IMR-90 (cell line): ENCODE measurements at regions of chr17 and their contacts with region 1.

Region 1: DNA sequence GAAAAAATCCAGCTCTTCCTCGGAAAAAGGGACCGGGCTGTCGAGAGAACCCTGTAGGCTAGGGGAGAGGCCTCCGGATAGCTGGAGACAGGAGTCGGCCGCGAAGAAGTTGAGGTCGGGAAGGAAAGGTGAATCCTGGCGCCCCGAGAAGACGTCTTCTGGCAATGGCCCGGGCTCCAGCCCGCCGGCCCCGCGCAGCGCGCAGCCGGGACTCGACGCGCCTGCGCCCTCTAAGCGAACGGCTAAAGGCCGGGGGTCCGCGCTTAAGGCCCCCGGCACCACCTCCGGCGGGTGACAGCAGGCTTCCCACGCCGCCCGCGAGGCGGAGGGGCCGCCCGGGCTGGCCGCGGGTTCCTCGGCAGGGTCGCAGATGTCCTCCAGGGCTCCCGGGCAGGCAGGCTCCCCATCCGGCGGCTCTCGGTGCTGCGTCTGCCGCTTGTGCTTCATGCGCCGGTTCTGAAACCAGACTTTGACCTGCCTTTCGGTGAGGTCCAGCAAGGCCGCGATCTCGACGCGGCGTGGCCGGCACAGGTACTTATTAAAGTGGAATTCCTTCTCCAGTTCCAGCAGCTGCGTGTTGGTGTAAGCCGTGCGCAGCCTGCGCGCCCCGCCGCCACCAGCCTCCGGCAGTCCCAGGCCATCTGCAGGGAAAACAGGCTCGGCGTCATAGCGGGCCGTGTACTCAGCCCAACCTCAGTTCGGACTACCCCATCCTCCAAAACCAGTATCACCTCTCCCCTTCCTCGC is 1.6 kb downstream of the HOXB2 start:
- DNase-seq: peak; percentile 67
- ATAC-seq: peak; percentile 0; the same call in 1 of the 2 replicates
- H3K4me3 ChIP-seq: peak overlapping the region; percentile 96
- H3K27ac ChIP-seq: peak overlapping the region; percentile 99
- H3K4me1 ChIP-seq: peaks cover 32% of the 10 kb centered on the region
- H3K27me3 ChIP-seq: no peaks in the 10 kb centered on the region
- CTCF ChIP-seq: no peak
- POLR2A ChIP-seq: no peak; the same call in 1 of the 2 replicates
- RAD21 ChIP-seq: no peak

Region 2: GRCh38 chr17:48335858-48336500 is 207.3 kb before region 1 on chr17:
- CTCF ChIA-PET with region 1: no interaction called
- POLR2A ChIA-PET with region 1: interaction called, 3 read pairs
- dilution Hi-C with region 1: no loop called
- in situ Hi-C with region 1: no loop called
- intact Hi-C with region 1: loop called (anchors 1 kb)
- DNase-seq: peak; percentile 71
- ATAC-seq: peak; percentile 74
- H3K4me3 ChIP-seq: no peak overlapping the region
- H3K27ac ChIP-seq: no peak overlapping the region
- H3K4me1 ChIP-seq: 0 out of 2 replicates have a peak, but pooled peaks cover 1% of the 10 kb centered on the region
- H3K27me3 ChIP-seq: peaks cover 40% of the 10 kb centered on the region
- CTCF ChIP-seq: peak; percentile 82
- POLR2A ChIP-seq: no peak
- RAD21 ChIP-seq: peak; percentile 73

Region 3: GRCh38 chr17:48483471-48484131 is 59.7 kb before region 1 on chr17:
- CTCF ChIA-PET with region 1: interaction called, 10 read pairs
- POLR2A ChIA-PET with region 1: interaction called, 8 read pairs
- dilution Hi-C with region 1: no loop called
- in situ Hi-C with region 1: no loop called
- intact Hi-C with region 1: loop called (anchors 2 kb)
- DNase-seq: peak; percentile 100
- ATAC-seq: peak; percentile 75
- H3K4me3 ChIP-seq: no peak overlapping the region
- H3K27ac ChIP-seq: peak overlapping the region; percentile 86
- H3K4me1 ChIP-seq: peaks cover 19% of the 10 kb centered on the region
- H3K27me3 ChIP-seq: no peaks in the 10 kb centered on the region
- CTCF ChIP-seq: no peak
- POLR2A ChIP-seq: no peak; the same call in 1 of the 2 replicates
- RAD21 ChIP-seq: peak; percentile 5; the same call in 1 of the 2 replicates

Region 4: DNA sequence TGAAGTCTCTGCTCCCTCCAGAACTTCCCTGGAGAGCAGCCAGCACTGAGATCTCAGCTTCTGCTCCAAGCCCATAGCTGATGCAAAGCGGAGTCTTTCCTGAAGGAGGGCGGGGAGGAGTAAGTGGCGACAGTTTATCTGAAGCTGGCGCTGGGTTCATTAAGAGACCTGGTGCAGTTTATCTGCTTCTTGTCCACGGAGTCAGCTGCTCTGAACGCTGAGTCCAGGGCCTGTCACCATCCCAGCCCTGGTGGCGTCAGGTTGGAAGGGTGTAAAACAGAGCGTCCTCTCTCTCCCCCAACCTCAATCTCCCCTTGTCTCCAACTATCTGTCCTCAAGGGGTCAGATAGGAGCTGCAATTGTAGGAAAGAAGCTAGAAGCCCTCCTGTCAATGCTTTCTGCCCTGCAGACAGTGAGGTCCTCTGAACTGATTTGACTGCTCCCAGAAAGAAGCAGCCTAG is 42.3 kb before region 1 on chr17:
- CTCF ChIA-PET with region 1: no interaction called
- POLR2A ChIA-PET with region 1: interaction called, 4 read pairs
- dilution Hi-C with region 1: no loop called
- in situ Hi-C with region 1: no loop called
- intact Hi-C with region 1: loop called (anchors 1 kb)
- DNase-seq: peak; percentile 62
- ATAC-seq: peak; percentile 11; the same call in 1 of the 2 replicates
- H3K4me3 ChIP-seq: no peak overlapping the region
- H3K27ac ChIP-seq: no peak overlapping the region; the same call in 1 of the 2 replicates
- H3K4me1 ChIP-seq: peaks cover 35% of the 10 kb centered on the region
- H3K27me3 ChIP-seq: no peaks in the 10 kb centered on the region
- CTCF ChIP-seq: 0 out of 2 replicates have a peak, but pooled peaks have one; percentile 1
- POLR2A ChIP-seq: no peak
- RAD21 ChIP-seq: peak; percentile 15; the same call in 1 of the 2 replicates

Region 5: DNA sequence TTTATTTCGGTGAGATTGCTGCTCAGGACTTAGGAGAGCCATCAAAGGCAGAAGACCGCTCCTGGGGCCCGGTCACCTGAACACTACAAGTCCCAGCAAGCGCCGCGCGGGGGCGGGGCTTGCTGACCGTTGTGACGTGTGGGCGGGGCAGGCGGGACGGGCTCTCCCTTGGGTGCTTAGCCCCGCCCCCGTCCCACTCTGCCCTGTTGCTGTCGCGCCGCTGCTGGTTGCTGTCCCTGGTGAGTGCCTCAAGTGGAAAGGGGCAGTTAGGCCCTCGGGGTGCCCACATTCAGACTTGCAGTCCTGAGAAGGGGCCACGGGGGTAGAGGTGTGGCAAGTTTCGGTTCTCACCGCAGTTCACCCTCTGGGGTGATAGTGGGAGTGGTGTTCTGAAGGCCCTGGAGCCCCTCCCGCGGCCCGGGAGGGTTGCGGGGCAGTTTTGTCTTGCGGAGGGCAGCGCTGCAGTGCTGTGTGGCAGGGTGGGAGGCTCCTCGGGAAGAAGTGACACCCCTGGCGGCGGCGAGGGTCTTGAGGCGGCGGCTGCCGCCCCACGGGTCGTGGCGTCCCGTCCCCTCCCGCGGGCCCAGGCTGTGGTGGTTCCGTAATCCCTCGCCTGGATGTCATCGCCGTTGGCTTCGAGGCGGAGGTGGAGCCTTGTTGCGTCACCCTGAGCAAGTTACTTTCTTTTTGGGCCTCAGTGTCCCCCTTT is 287.7 kb after region 1 on chr17 and contains the start of gene CALCOCO2:
- CTCF ChIA-PET with region 1: no interaction called
- POLR2A ChIA-PET with region 1: interaction called, 25 read pairs
- dilution Hi-C with region 1: no loop called
- in situ Hi-C with region 1: no loop called
- intact Hi-C with region 1: no loop called
- DNase-seq: peak; percentile 89
- ATAC-seq: peak; percentile 99
- H3K4me3 ChIP-seq: peak within 1 kb of the TSS; percentile 95
- H3K27ac ChIP-seq: peak within 1 kb of the TSS; percentile 87
- H3K4me1 ChIP-seq: peaks cover 5% of the 10 kb centered on the region
- H3K27me3 ChIP-seq: no peaks in the 10 kb centered on the region
- CTCF ChIP-seq: no peak
- POLR2A ChIP-seq: peak; percentile 55; the same call in 1 of the 2 replicates
- RAD21 ChIP-seq: no peak
- total RNA-seq, gene CALCOCO2: 32.2 and 53.4 TPM in 2 replicates